Activated CD8-positive, alpha-beta T cell treated with anti-CD3 and anti-CD28 coated beads for 36 hours (primary cell): ENCODE measurements at regions of chr4 and their contacts with region 1.

Region 1: DNA sequence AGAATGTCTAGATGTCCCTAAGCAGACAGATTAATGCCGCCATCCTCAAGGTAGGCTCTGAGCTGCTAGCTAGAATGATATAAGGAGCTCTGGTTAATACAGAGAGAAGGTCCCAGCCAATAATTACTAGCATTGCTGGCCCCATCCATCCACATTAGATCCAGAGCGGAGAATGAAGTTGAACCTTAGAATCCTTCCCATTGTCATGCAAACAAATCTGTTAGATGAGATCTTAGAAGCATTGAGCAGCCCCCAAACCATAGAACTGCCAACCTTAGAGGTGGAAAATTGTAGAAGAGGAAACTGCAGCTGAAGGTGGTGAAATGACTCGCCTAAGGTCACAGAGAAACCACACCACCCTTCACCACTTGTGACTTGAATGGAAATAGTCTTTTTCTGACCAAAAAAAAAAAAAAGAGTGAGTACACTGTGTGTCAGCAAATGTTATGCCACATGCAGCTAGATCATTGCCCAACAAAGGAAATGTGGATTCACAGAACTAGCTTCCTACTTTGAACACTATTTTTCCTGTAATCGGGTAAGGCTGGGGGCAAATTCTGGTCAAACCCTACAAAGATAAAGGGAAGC is 162.1 kb downstream of the SMIM20 start:
- DNase-seq: peak; percentile 83
- ATAC-seq: peak; percentile 55
- H3K4me3 Mint-ChIP-seq: peak overlapping the region; percentile 40
- H3K27ac Mint-ChIP-seq: peak overlapping the region; percentile 86
- H3K4me1 Mint-ChIP-seq: peaks cover 70% of the 10 kb centered on the region
- H3K27me3 Mint-ChIP-seq: peaks cover 14% of the 10 kb centered on the region
- CTCF ChIP-seq: no peak

Region 2: GRCh38 chr4:26015133-26015651 is 60.9 kb before region 1 on chr4:
- CTCF ChIA-PET with region 1: no interaction called
- POLR2A ChIA-PET with region 1: no interaction called
- intact Hi-C with region 1: no loop called
- DNase-seq: no peak
- ATAC-seq: no peak
- H3K4me3 Mint-ChIP-seq: no peak overlapping the region
- H3K27ac Mint-ChIP-seq: no peak overlapping the region
- H3K4me1 Mint-ChIP-seq: peaks cover 7% of the 10 kb centered on the region
- H3K27me3 Mint-ChIP-seq: peaks cover 17% of the 10 kb centered on the region
- CTCF ChIP-seq: no peak

Region 3: GRCh38 chr4:26061248-26061986 is 14.7 kb before region 1 on chr4:
- CTCF ChIA-PET with region 1: interaction called, 12 read pairs
- POLR2A ChIA-PET with region 1: no interaction called
- intact Hi-C with region 1: no loop called
- DNase-seq: peak; percentile 44
- ATAC-seq: peak; percentile 71
- H3K4me3 Mint-ChIP-seq: no peak overlapping the region
- H3K27ac Mint-ChIP-seq: no peak overlapping the region
- H3K4me1 Mint-ChIP-seq: peaks cover 14% of the 10 kb centered on the region
- H3K27me3 Mint-ChIP-seq: peaks cover 9% of the 10 kb centered on the region
- CTCF ChIP-seq: peak; percentile 50

Region 4: DNA sequence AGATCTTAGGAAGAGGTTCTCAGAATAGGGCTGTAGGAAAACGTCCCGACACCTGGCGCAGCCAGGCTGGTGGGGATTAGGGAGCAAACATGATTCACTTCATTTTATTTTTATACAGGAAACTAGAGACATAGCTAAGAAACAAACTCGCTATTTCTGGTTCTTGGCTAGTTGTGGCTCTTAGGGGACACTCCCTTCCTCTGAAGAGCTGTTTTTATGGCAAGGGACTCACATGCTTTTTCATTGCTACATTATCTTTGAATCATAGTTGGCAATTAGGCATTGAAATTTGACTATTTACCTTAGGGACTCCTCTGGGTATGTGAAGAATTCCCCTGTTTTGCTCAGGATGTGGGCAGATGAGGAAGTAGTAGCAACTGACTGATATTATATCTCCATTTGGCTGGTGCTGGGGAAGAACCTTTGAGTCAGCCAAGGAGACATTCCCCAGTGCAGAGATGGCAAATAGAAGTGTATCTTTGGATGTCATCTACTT is 12.4 kb after region 1 on chr4:
- CTCF ChIA-PET with region 1: interaction called, 16 read pairs
- POLR2A ChIA-PET with region 1: interaction called, 13 read pairs
- intact Hi-C with region 1: no loop called
- DNase-seq: peak; percentile 55
- ATAC-seq: peak; percentile 82
- H3K4me3 Mint-ChIP-seq: peak overlapping the region; percentile 40
- H3K27ac Mint-ChIP-seq: peak overlapping the region; percentile 87
- H3K4me1 Mint-ChIP-seq: peaks cover 48% of the 10 kb centered on the region
- H3K27me3 Mint-ChIP-seq: peaks cover 20% of the 10 kb centered on the region
- CTCF ChIP-seq: no peak

Region 5: GRCh38 chr4:26197018-26197779 is 121.1 kb after region 1 on chr4:
- CTCF ChIA-PET with region 1: interaction called, 6 read pairs
- POLR2A ChIA-PET with region 1: interaction called, 3 read pairs
- intact Hi-C with region 1: loop called (anchors 2 kb)
- DNase-seq: peak; percentile 86
- ATAC-seq: peak; percentile 88
- H3K4me3 Mint-ChIP-seq: peak overlapping the region; percentile 38
- H3K27ac Mint-ChIP-seq: peak overlapping the region; percentile 89
- H3K4me1 Mint-ChIP-seq: peaks cover 63% of the 10 kb centered on the region
- H3K27me3 Mint-ChIP-seq: no peaks in the 10 kb centered on the region
- CTCF ChIP-seq: no peak

Region 6: GRCh38 chr4:26307037-26307800 is 231.1 kb after region 1 on chr4:
- CTCF ChIA-PET with region 1: no interaction called
- POLR2A ChIA-PET with region 1: no interaction called
- intact Hi-C with region 1: no loop called
- DNase-seq: peak; percentile 45
- ATAC-seq: peak; percentile 60
- H3K4me3 Mint-ChIP-seq: no peak overlapping the region
- H3K27ac Mint-ChIP-seq: peak overlapping the region; percentile 76
- H3K4me1 Mint-ChIP-seq: peaks cover 34% of the 10 kb centered on the region
- H3K27me3 Mint-ChIP-seq: no peaks in the 10 kb centered on the region
- CTCF ChIP-seq: no peak

Region 7: GRCh38 chr4:26319467-26319948 is 243.4 kb after region 1 on chr4:
- CTCF ChIA-PET with region 1: interaction called, 19 read pairs
- POLR2A ChIA-PET with region 1: interaction called, 16 read pairs
- intact Hi-C with region 1: loop called (anchors 1 kb)
- DNase-seq: peak; percentile 99
- ATAC-seq: peak; percentile 67
- H3K4me3 Mint-ChIP-seq: peak overlapping the region; percentile 92
- H3K27ac Mint-ChIP-seq: peak overlapping the region; percentile 100
- H3K4me1 Mint-ChIP-seq: peaks cover 34% of the 10 kb centered on the region
- H3K27me3 Mint-ChIP-seq: no peaks in the 10 kb centered on the region
- CTCF ChIP-seq: no peak